ENCODE measurements at regions of chr5 and their contacts with region 1.

Region 1: DNA sequence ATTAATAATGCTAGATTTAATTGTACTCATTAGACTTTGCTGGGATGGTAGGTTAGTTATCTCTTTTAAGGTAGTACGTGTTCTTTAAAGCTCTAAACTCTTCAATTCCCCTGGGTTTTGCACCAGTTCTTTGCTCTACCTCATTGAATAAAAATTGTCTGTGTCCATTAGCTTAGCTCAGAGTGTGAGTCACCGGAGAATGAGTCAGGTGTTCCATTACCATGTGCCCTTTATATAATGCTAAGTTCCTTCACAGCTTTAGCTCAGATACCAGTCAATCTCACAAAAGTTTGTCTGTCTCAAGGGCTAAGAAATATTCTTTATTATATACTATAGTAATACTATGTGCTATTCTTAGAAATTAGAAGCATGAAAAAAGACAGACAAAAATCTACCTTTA is 339.4 kb downstream of the PRELID2 start:
- DNase-seq: no peak

Region 2: GRCh38 chr5:145283101-145283810 is 212.5 kb before region 1 on chr5:
- intact Hi-C with region 1: no loop called
- DNase-seq: no peak

Region 3: GRCh38 chr5:145484158-145484557 is 11.6 kb before region 1 on chr5:
- intact Hi-C with region 1: loop called in 1 of 2 experiments (anchors 1 kb)
- DNase-seq: no peak

Region 4: DNA sequence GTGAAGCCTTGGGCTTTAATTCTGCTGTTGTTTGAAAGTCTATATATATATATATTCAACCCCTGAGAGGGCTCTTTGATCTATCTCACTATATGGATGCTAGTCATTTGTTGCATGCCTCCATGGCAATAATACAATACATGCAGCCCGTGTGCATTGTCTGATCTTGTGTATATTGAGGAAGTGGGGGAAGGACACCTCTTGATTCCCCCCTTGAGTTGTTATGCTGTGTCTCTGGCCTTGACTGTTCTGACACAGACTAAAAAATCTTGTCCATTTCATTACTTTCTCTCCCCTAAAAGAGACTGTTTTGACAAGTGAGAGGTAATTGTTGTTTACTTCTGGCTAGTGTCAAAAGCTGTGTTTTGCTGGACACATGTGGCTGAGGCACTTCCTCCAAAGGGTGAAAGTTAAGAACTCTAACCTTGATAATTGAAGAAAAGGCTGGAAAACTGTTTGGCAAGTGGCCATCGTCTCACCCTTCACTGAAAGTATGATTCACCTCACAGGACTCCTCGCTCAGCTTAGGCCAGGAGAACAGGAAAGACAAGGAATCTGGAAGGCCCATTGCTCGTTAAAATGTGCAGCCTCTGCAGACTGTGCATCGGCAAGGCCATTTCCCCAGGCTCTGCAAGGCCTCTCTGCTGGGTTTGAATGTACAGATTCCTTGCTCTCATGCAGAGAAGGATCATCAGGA is 35.4 kb after region 1 on chr5:
- intact Hi-C with region 1: no loop called
- DNase-seq: no peak

Measured in posterior vena cava (tissue), 2 donors.